ENCODE measurements at regions of chr17 and their contacts with region 1.

Region 1: GRCh38 chr17:47720754-47721533 is 12.1 kb upstream of the TBX21 start:
- DNase-seq: peak; percentile 62
- ATAC-seq: peak; percentile 80
- H3K4me3 Mint-ChIP-seq: no peak overlapping the region
- H3K27ac Mint-ChIP-seq: peak overlapping the region; percentile 41
- H3K4me1 Mint-ChIP-seq: peaks cover 58% of the 10 kb centered on the region
- H3K27me3 Mint-ChIP-seq: peaks cover 15% of the 10 kb centered on the region
- CTCF ChIP-seq: no peak

Region 2: DNA sequence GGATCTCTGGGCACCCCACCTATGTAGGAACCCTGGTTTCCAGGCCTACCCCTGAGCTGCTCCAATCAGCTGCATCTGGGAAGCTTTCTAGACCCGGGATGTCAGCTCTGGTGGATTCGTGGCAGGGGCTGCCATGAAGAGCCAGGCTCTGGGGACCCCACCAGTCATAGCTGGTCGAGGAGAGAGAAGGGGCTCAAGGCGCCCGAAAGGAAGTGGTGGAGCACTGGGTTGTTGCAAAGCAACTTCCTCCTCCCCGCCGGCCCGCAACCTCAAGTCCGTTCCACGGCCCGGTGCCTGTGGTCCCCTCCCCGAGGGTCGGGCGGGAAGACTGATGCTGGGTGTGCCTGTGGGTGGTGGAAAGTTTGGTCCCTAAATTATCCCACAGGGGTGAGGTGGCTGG is 16.8 kb before region 1 on chr17:
- CTCF ChIA-PET with region 1: interaction called, 12 read pairs
- POLR2A ChIA-PET with region 1: interaction called, 15 read pairs
- intact Hi-C with region 1: loop called (anchors 1 kb)
- DNase-seq: peak; percentile 48
- ATAC-seq: peak; percentile 67
- H3K4me3 Mint-ChIP-seq: peak overlapping the region; percentile 73
- H3K27ac Mint-ChIP-seq: peak overlapping the region; percentile 65
- H3K4me1 Mint-ChIP-seq: peaks cover 58% of the 10 kb centered on the region
- H3K27me3 Mint-ChIP-seq: no peaks in the 10 kb centered on the region
- CTCF ChIP-seq: no peak

Region 3: GRCh38 chr17:47733047-47733673 is 12.2 kb after region 1 on chr17 and contains the start of gene TBX21:
- CTCF ChIA-PET with region 1: interaction called, 5 read pairs
- POLR2A ChIA-PET with region 1: interaction called, 17 read pairs
- intact Hi-C with region 1: loop called (anchors 1 kb)
- DNase-seq: peak; percentile 79
- ATAC-seq: peak; percentile 91
- H3K4me3 Mint-ChIP-seq: peak within 1 kb of the TSS; percentile 94
- H3K27ac Mint-ChIP-seq: peak within 1 kb of the TSS; percentile 87
- H3K4me1 Mint-ChIP-seq: peaks cover 52% of the 10 kb centered on the region
- H3K27me3 Mint-ChIP-seq: peaks cover 2% of the 10 kb centered on the region
- CTCF ChIP-seq: peak; percentile 43
- total RNA-seq, gene TBX21: 3.6 and 3.8 TPM in 2 replicates

Measured in activated B cell treated with CpG ODN at 0.5 μM for 24 hours (primary cell).